GM10248 (cell line): ENCODE measurements at regions of chr11 and their contacts with region 1.

Region 1: DNA sequence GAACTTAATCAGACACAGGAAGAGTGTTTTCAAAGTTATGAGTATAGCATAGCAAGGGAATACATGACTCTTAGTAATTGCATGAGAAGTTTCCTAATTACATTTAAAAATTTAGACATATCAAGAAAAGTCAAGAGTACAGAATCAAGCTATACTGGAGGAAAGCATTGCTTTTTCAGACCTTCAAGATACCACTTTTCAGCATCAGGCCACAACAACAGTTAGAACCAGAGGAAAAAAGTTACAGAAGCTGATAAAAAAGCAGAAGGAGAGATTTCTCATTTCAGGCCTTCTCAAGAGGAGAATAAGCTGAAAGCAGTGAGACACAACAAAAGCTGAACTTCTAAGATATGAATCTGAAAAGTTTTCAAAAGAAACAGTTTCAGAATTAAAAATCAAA is 28.1 kb upstream of the QSER1 start:
- DNase-seq: no peak
- CTCF ChIP-seq: no peak

Region 2: GRCh38 chr11:32884770-32885384 is 20.3 kb after region 1 on chr11:
- CTCF ChIA-PET with region 1: interaction called, 11 read pairs
- POLR2A ChIA-PET with region 1: no interaction called
- DNase-seq: no peak
- CTCF ChIP-seq: peak; percentile 49

Region 3: GRCh38 chr11:32983506-32983905 is 119.0 kb after region 1 on chr11:
- CTCF ChIA-PET with region 1: no interaction called
- POLR2A ChIA-PET with region 1: no interaction called
- DNase-seq: no peak
- CTCF ChIP-seq: no peak